CD8-positive, alpha-beta T cell (primary cell): ENCODE measurements at regions of chr15 and their contacts with region 1.

Region 1: DNA sequence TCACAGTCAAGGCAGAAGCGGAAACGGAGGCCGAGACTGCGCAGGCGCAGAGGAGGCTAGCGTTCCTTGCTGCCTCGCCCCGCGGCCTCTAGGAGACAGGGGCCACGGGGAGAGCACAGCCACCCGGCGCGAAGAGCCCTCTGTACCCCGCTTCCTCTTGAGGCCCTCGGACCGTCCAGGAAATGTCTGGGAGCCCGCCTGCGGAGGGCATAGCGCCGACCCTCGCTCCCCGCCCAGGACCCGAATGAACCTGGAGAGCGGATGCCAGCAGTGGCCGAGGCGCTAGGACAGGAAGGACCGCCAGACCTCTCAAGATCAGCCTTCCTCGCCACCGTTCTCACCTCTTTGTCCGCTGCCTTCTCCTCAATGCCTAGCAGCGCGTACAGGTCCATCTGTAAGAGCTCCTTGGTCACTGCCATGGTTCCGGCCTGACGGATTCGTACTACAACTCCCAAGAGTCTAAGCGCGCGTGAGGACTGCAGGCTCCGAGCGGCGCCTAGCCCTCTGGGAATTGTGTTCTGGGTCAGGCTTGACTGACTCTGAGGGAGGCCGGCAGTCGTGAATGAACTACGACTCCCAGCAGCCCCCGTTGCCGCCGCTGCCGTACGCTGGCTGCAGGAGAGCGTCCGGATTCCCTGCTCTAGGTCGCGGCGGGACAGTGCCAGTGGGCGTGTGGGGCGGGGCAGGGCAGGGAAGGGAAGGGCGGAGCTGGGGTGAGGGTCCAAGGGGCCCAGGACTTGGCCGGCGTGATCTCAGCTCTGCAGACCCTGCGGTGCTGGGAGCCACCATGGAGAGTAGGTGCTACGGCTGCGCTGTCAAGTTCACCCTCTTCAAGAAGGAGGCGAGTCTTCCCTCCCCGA is at the starts of genes DNAJC17 and ZFYVE19:
- DNase-seq: peak; percentile 86 to 97 (median 94)
- ATAC-seq: peak; percentile 97
- H3K4me3 ChIP-seq: peak within 1 kb of the TSS; percentile 85 to 88
- H3K4me3 Mint-ChIP-seq: peak within 1 kb of the TSS; percentile 99
- H3K27ac ChIP-seq: peak within 1 kb of the TSS; percentile 69 to 87
- H3K27ac Mint-ChIP-seq: peak within 1 kb of the TSS; percentile 98
- H3K4me1 ChIP-seq: peaks cover 14% of the 10 kb centered on the region
- H3K4me1 Mint-ChIP-seq: peaks cover 26% of the 10 kb centered on the region
- H3K27me3 ChIP-seq: no peaks in the 10 kb centered on the region
- H3K27me3 Mint-ChIP-seq: no peaks in the 10 kb centered on the region
- CTCF ChIP-seq: peak; percentile 17
- total RNA-seq, gene DNAJC17: 11.2 to 11.9 TPM
- total RNA-seq, gene ZFYVE19: 9.6 to 11.0 TPM

Region 2: DNA sequence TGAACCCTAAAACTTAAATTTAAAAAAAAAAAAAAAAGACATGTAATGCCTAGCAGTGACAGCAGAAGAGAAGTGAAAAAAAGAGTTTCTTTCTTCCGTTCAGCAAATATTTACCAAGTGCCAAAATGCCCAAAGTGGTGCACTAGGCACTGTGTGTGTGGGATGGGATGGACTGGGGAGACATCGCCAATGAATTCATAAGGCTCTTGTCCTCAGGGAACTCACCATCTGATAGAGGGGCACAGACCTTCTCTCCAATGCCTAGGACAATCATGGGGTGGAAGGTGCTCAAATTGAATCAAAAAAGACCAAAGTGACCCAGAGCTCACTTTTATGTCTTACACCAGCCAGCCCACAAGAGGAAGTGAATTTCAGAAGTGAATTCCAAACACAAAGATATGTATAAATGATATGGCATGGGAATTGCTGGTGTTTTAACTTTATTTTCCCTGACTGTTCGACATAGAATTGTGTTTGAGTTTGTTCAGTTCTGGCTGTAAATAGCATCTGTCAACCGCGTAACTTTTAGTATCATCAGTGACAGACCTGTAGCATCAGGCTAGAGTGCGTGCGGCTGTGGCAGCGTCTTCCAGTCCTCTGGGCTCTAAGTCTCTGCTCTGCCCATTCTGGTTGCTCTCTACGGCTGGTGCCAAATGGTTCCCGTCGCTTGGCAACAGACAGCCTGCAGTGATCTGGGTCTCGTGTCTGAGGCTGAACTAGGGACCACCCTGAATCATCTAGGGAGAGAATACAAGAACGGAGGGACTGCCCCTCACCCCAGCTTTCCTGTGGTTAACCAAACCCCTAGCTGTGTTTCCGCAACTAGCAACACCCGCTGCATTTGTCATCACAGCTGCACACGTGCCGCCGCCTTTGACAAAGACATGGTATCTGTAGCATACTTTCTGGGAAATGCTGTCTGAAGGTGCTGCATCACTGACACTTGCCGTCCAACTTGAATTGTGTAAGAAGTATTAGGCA is 1380.4 kb before region 1 on chr15:
- CTCF ChIA-PET with region 1: no interaction called
- POLR2A ChIA-PET with region 1: no interaction called
- intact Hi-C with region 1: no loop called
- DNase-seq: peak; percentile 46 to 94 (median 78)
- ATAC-seq: peak; percentile 90
- H3K4me3 ChIP-seq: peak overlapping the region; percentile 10 to 13
- H3K4me3 Mint-ChIP-seq: peak overlapping the region; percentile 68
- H3K27ac ChIP-seq: no peak overlapping the region
- H3K27ac Mint-ChIP-seq: peak overlapping the region; percentile 76
- H3K4me1 ChIP-seq: peaks cover 26% of the 10 kb centered on the region
- H3K4me1 Mint-ChIP-seq: peaks cover 34% of the 10 kb centered on the region
- H3K27me3 ChIP-seq: peaks cover 0 to 4% of the 10 kb centered on the region in 2 experiments
- H3K27me3 Mint-ChIP-seq: peaks cover 9% of the 10 kb centered on the region
- CTCF ChIP-seq: no peak

Region 3: DNA sequence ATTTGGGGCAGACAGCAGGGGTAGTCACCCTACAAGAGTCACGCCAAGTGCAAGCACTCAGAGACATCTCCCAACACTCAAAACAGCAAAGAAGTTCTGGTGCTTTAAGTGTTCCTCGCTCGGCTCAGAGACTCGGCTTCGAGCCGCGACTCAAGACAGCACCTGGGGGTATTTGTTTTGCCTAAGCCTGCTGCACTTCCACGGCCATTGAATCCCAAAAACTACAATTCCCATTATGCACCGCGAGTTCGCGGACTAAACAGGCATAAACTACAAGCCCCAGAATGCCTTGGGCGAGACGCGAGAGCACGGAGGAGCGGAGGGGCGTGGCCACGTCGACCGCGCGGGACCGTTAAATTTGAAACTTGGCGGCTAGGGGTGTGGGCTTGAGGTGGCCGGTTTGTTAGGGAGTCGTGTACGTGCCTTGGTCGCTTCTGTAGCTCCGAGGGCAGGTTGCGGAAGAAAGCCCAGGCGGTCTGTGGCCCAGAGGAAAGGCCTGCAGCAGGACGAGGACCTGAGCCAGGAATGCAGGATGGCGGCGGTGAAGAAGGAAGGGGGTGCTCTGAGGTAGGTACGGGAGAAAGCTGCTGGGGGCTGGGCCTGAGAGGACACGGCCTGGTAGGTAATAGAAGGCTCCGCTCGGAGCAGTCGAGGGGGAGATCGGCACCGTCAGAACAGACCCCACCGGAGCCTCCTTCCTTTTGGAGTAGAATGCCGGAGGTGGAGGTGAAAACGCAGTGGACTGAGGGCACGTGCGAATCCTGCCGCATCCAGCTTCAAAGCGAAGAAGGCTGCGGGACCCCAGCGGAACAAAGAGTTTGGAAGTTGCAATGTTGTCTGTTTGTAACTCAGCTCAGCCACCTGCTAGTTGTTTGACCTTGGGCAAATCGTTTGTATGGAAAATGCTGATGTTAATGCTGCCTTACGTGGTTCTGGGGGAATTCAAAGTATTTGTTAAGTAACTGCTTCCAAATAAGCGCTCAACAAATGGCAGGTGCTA is 646.3 kb before region 1 on chr15 and contains the start of gene BUB1B:
- CTCF ChIA-PET with region 1: no interaction called
- POLR2A ChIA-PET with region 1: no interaction called
- intact Hi-C with region 1: loop called in 1 of 2 experiments (anchors 5 kb)
- DNase-seq: peak; percentile 82 to 96 (median 91)
- ATAC-seq: peak; percentile 98
- H3K4me3 ChIP-seq: peak within 1 kb of the TSS; percentile 61 to 71
- H3K4me3 Mint-ChIP-seq: no peak within 1 kb of the TSS
- H3K27ac ChIP-seq: no peak within 1 kb of the TSS
- H3K27ac Mint-ChIP-seq: no peak within 1 kb of the TSS
- H3K4me1 ChIP-seq: peaks cover 10% of the 10 kb centered on the region
- H3K4me1 Mint-ChIP-seq: no peaks in the 10 kb centered on the region
- H3K27me3 ChIP-seq: no peaks in the 10 kb centered on the region
- H3K27me3 Mint-ChIP-seq: no peaks in the 10 kb centered on the region
- CTCF ChIP-seq: no peak
- total RNA-seq, gene BUB1B: 0.47 to 1.2 TPM

Region 4: GRCh38 chr15:40593588-40594428 is 213.4 kb before region 1 on chr15 and contains the start of gene KNL1:
- CTCF ChIA-PET with region 1: no interaction called
- POLR2A ChIA-PET with region 1: no interaction called
- intact Hi-C with region 1: loop called in 1 of 2 experiments (anchors 1 kb)
- DNase-seq: peak; percentile 70 to 96 (median 85)
- ATAC-seq: peak; percentile 83
- H3K4me3 ChIP-seq: peak within 1 kb of the TSS; percentile 76 to 82
- H3K4me3 Mint-ChIP-seq: peak within 1 kb of the TSS; percentile 95
- H3K27ac ChIP-seq: peak within 1 kb of the TSS; percentile 78 to 92
- H3K27ac Mint-ChIP-seq: peak within 1 kb of the TSS; percentile 98
- H3K4me1 ChIP-seq: no peaks in the 10 kb centered on the region
- H3K4me1 Mint-ChIP-seq: peaks cover 20% of the 10 kb centered on the region
- H3K27me3 ChIP-seq: peaks cover 0 to 2% of the 10 kb centered on the region in 2 experiments
- H3K27me3 Mint-ChIP-seq: peaks cover 6% of the 10 kb centered on the region
- CTCF ChIP-seq: no peak
- total RNA-seq, gene KNL1: 0.83 to 0.98 TPM

Region 5: GRCh38 chr15:40702077-40702476 is 105.2 kb before region 1 on chr15:
- CTCF ChIA-PET with region 1: no interaction called
- POLR2A ChIA-PET with region 1: no interaction called
- intact Hi-C with region 1: no loop called
- DNase-seq: peak in 2 of 9 experiments; percentile 46 to 59
- ATAC-seq: no peak
- H3K4me3 ChIP-seq: no peak overlapping the region
- H3K4me3 Mint-ChIP-seq: no peak overlapping the region
- H3K27ac ChIP-seq: no peak overlapping the region
- H3K27ac Mint-ChIP-seq: no peak overlapping the region
- H3K4me1 ChIP-seq: no peaks in the 10 kb centered on the region
- H3K4me1 Mint-ChIP-seq: no peaks in the 10 kb centered on the region
- H3K27me3 ChIP-seq: no peaks in the 10 kb centered on the region
- H3K27me3 Mint-ChIP-seq: no peaks in the 10 kb centered on the region
- CTCF ChIP-seq: peak; percentile 38

Region 6: DNA sequence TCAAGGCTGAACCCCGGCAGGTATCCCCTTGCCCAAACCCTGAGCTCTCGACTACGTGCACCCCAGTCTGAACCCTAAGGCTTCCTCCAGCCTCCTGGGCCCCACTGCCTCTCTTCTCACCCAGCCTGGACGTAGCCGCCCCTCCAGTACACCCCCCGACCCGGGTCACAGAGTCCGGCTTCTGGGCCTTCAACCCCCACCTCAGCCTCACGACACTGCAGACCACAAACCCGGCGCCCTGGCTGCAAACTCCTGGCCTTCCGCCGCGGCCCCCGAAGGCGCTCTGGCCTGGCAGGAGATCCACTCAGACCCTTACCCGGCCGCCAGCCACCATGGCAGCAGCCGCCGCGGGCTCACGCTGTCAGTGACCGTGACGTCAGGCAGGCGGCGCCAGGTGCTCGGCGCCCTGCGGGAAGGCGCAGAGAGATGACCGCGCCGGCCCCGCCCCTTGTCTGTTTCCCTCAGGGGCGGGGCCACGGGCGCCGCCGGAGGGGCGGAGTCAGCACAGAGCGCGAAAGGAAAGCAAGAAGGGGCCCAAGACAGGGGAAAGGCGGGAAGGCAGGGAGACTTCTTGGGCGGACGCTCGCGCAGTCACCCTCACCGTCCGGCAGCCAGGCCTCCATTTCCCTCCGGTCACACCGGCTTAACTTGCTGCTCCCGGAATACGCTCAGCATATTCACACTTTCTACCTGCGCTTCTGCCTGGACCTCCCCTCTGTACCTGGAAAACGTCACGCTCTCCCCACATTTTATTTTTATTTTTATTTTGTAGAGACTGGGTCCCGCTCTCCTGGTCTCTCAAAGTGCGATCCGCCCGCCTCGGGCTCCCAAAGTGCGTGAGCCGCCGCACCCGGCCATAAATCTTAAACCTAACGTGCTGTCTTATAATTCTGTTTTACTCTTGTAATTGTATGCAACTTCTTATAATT is 52.1 kb before region 1 on chr15 and contains the start of gene RMDN3:
- CTCF ChIA-PET with region 1: no interaction called
- POLR2A ChIA-PET with region 1: interaction called, 3 read pairs
- intact Hi-C with region 1: loop called (anchors 1 kb)
- DNase-seq: peak; percentile 84 to 96 (median 93)
- ATAC-seq: peak; percentile 95
- H3K4me3 ChIP-seq: peak within 1 kb of the TSS; percentile 99
- H3K4me3 Mint-ChIP-seq: peak within 1 kb of the TSS; percentile 94
- H3K27ac ChIP-seq: peak within 1 kb of the TSS; percentile 91 to 94
- H3K27ac Mint-ChIP-seq: peak within 1 kb of the TSS; percentile 94
- H3K4me1 ChIP-seq: peaks cover 6% of the 10 kb centered on the region
- H3K4me1 Mint-ChIP-seq: peaks cover 26% of the 10 kb centered on the region
- H3K27me3 ChIP-seq: no peaks in the 10 kb centered on the region
- H3K27me3 Mint-ChIP-seq: no peaks in the 10 kb centered on the region
- CTCF ChIP-seq: no peak
- total RNA-seq, gene RMDN3: 26.7 to 30.5 TPM

Region 7: GRCh38 chr15:40782580-40783227 is 24.6 kb before region 1 on chr15:
- CTCF ChIA-PET with region 1: interaction called, 15 read pairs
- POLR2A ChIA-PET with region 1: no interaction called
- intact Hi-C with region 1: no loop called
- DNase-seq: peak; percentile 53 to 86 (median 83)
- ATAC-seq: peak; percentile 93
- H3K4me3 ChIP-seq: no peak overlapping the region
- H3K4me3 Mint-ChIP-seq: no peak overlapping the region
- H3K27ac ChIP-seq: no peak overlapping the region
- H3K27ac Mint-ChIP-seq: no peak overlapping the region
- H3K4me1 ChIP-seq: peaks cover 14% of the 10 kb centered on the region
- H3K4me1 Mint-ChIP-seq: peaks cover 19% of the 10 kb centered on the region
- H3K27me3 ChIP-seq: no peaks in the 10 kb centered on the region
- H3K27me3 Mint-ChIP-seq: no peaks in the 10 kb centered on the region
- CTCF ChIP-seq: peak; percentile 79

Region 8: DNA sequence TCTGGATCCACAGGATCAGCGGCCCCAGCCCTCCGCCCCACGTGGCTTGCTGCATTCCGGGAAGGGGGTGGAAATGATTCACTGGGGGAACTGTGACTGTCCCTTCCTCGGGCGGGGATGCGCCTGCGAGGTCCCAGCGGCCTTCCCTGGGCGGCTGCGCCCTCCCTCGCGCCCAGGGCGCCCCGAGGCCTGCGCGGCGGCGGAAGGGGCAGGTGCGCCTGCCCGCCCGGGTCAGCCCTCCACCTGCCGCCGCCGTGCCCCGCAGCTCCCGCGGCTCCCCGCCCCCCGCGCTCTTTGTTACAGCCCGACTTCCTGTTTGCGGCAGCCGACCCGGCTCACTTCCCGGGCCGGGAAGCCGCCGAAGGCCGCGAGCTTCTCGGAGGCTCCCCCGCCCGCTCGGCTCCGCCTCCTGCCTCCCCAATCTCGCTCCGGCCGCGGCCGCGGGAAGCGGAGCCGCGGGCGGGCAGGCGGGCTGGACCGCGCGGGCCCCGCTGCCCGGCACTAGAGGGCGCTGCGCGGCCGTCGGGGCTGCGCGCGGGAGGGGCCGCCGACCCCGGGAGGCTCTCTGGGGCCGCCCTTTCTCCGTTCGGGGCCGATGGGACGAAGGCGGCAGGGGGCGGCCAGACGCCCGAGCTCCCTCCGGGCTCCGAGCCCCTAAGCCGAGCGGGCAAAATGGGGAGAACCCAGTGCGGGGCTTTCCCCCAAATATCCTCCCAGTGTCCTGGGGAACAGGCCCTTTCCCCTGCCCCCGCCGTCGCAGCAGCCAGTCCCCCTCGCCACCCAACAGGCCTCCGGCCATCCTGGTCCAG is 134.5 kb after region 1 on chr15:
- CTCF ChIA-PET with region 1: no interaction called
- POLR2A ChIA-PET with region 1: no interaction called
- intact Hi-C with region 1: no loop called
- DNase-seq: peak in 8 of 9 experiments; percentile 56 to 84 (median 66)
- ATAC-seq: peak; percentile 72
- H3K4me3 ChIP-seq: peak overlapping the region; percentile 69 to 78
- H3K4me3 Mint-ChIP-seq: peak overlapping the region; percentile 86
- H3K27ac ChIP-seq: peak overlapping the region; percentile 30 to 64
- H3K27ac Mint-ChIP-seq: peak overlapping the region; percentile 30
- H3K4me1 ChIP-seq: peaks cover 29% of the 10 kb centered on the region
- H3K4me1 Mint-ChIP-seq: peaks cover 37% of the 10 kb centered on the region
- H3K27me3 ChIP-seq: no peaks in the 10 kb centered on the region
- H3K27me3 Mint-ChIP-seq: no peaks in the 10 kb centered on the region
- CTCF ChIP-seq: peak; percentile 40

Region 9: DNA sequence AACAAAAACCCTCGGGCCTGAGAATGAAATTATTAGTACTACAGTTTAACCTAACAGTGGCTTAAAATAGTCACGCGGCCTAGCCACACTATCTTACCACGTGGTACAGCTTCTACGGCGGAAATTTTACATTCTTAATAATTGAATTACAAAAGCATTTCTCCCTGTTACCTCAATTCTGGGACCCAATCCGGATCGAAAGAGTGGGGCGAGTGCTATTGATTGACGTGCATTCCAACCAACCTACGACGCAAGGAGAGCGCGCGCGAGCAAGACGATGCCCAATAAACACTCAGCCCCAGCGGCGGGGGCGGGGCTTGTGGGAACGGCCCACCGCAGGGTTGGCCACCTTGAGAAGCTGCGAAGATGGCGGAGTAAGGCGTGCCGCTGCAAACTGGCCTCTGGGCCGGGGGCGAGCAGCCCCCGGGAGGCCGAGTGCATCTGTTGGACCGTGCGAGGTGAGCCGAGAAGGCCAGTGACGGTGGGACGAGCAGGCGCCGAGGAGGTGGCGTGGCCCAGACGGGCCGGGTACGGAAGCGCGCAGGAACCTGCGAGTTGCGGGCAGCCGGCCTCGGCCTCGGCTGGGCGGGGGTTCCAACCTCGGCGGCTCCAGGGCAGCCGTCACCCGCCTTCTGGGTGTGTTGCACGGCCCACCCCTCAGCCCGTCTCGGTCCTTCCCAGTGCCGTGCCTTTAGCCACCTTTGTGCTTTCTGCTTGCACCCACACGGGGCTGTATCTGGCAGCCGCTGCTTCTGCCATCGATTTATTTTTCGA is 476.6 kb after region 1 on chr15:
- CTCF ChIA-PET with region 1: no interaction called
- POLR2A ChIA-PET with region 1: no interaction called
- intact Hi-C with region 1: loop called in 1 of 2 experiments (anchors 5 kb)
- DNase-seq: peak; percentile 94 to 100 (median 97)
- ATAC-seq: peak; percentile 96
- H3K4me3 ChIP-seq: peak overlapping the region; percentile 70 to 86
- H3K4me3 Mint-ChIP-seq: peak overlapping the region; percentile 89
- H3K27ac ChIP-seq: peak overlapping the region; percentile 91 to 93
- H3K27ac Mint-ChIP-seq: peak overlapping the region; percentile 95
- H3K4me1 ChIP-seq: peaks cover 25% of the 10 kb centered on the region
- H3K4me1 Mint-ChIP-seq: peaks cover 48% of the 10 kb centered on the region
- H3K27me3 ChIP-seq: no peaks in the 10 kb centered on the region
- H3K27me3 Mint-ChIP-seq: no peaks in the 10 kb centered on the region
- CTCF ChIP-seq: no peak

Region 10: DNA sequence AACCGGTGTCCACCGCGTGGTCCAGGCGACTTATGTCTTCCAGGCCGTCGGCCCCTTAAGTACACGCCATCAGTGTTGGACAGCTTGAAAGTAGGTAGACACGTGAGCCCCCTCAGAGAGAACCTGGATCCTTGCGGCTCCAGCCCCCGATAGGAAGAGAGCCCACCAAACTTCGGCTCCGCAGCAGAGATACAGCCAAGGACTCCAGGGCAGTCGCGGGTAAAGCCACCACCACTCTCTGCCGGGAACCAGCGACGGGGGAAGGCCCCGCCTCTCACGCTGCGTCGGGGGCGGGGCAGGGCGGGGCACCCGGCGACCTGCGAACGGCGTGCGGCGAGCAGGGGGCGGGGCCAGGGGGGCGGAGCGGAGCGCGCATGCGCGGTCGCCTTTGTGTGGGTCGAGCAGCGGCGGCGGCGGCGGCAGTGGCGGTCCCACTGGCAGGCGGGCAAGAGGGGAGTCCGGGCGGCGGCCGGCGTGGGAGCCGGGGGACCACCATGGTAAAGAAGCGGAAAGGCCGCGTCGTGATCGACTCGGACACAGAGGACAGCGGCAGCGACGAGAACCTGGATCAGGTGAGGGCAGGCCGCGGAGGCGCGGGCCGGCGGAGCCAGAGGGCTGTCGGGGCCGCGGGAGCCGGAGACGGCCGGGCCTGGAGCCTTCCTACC is 609.6 kb after region 1 on chr15 and contains the start of gene RTF1:
- CTCF ChIA-PET with region 1: no interaction called
- POLR2A ChIA-PET with region 1: no interaction called
- intact Hi-C with region 1: loop called in 1 of 2 experiments (anchors 2 kb)
- DNase-seq: peak; percentile 94 to 99 (median 98)
- ATAC-seq: peak; percentile 98
- H3K4me3 ChIP-seq: peak within 1 kb of the TSS; percentile 79 to 91
- H3K4me3 Mint-ChIP-seq: peak within 1 kb of the TSS; percentile 93
- H3K27ac ChIP-seq: peak within 1 kb of the TSS; percentile 64 to 76
- H3K27ac Mint-ChIP-seq: peak within 1 kb of the TSS; percentile 94
- H3K4me1 ChIP-seq: peaks cover 30% of the 10 kb centered on the region
- H3K4me1 Mint-ChIP-seq: peaks cover 43% of the 10 kb centered on the region
- H3K27me3 ChIP-seq: no peaks in the 10 kb centered on the region
- H3K27me3 Mint-ChIP-seq: no peaks in the 10 kb centered on the region
- CTCF ChIP-seq: no peak
- total RNA-seq, gene RTF1: 33.2 to 41.6 TPM